ENCODE measurements at regions of chr5 and their contacts with region 1.

Region 1: GRCh38 chr5:127030259-127031146 is at the start of gene MARCHF3:
- DNase-seq: peak; percentile 96
- H3K4me3 Mint-ChIP-seq: peak within 1 kb of the TSS; percentile 89
- H3K27ac Mint-ChIP-seq: peak within 1 kb of the TSS; percentile 69
- H3K4me1 Mint-ChIP-seq: peaks cover 30% of the 10 kb centered on the region
- H3K27me3 Mint-ChIP-seq: peaks cover 32% of the 10 kb centered on the region
- total RNA-seq, gene MARCHF3: 5.2 and 5.9 TPM in 2 replicates

Region 2: GRCh38 chr5:126676195-126676624 is 354.3 kb before region 1 on chr5:
- intact Hi-C with region 1: loop called (anchors 2 kb)
- DNase-seq: peak; percentile 52
- H3K4me3 Mint-ChIP-seq: no peak overlapping the region
- H3K27ac Mint-ChIP-seq: peak overlapping the region; percentile 8
- H3K4me1 Mint-ChIP-seq: peaks cover 6% of the 10 kb centered on the region
- H3K27me3 Mint-ChIP-seq: peaks cover 3% of the 10 kb centered on the region

Region 3: DNA sequence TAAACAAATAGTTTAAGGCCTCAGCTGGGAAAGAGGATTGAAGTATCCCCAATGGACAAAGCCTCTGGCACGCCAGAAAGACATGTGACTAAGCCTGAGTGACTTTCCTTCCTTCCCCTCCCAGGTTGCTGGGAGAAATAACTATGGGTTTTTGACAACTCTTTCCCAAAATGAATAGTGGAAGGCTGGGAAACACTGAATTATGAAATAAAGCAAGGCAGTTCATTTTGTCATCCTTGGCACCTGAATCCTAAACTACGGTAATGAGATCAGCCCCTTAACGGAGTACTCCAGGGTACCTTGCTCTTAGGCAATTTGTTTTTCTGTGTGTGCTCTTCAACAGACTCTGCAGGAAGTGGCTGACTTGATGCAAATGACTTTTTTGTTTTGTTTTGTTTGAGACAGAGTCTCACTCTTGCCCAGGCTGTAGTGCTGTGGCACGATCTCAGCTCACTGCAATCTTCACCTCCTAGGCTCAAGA is 178.4 kb before region 1 on chr5:
- intact Hi-C with region 1: loop called (anchors 2 kb)
- DNase-seq: peak; percentile 28
- H3K4me3 Mint-ChIP-seq: peak overlapping the region; percentile 80
- H3K27ac Mint-ChIP-seq: peak overlapping the region; percentile 87
- H3K4me1 Mint-ChIP-seq: peaks cover 43% of the 10 kb centered on the region
- H3K27me3 Mint-ChIP-seq: no peaks in the 10 kb centered on the region

Region 4: GRCh38 chr5:127072861-127073846 is 42.7 kb after region 1 on chr5 and contains the start of gene C5orf63:
- intact Hi-C with region 1: loop called (anchors 1 kb)
- DNase-seq: peak; percentile 66
- H3K4me3 Mint-ChIP-seq: peak within 1 kb of the TSS; percentile 92
- H3K27ac Mint-ChIP-seq: peak within 1 kb of the TSS; percentile 88
- H3K4me1 Mint-ChIP-seq: peaks cover 22% of the 10 kb centered on the region
- H3K27me3 Mint-ChIP-seq: no peaks in the 10 kb centered on the region
- total RNA-seq, gene C5orf63: 4.0 and 7.0 TPM in 2 replicates

Region 5: DNA sequence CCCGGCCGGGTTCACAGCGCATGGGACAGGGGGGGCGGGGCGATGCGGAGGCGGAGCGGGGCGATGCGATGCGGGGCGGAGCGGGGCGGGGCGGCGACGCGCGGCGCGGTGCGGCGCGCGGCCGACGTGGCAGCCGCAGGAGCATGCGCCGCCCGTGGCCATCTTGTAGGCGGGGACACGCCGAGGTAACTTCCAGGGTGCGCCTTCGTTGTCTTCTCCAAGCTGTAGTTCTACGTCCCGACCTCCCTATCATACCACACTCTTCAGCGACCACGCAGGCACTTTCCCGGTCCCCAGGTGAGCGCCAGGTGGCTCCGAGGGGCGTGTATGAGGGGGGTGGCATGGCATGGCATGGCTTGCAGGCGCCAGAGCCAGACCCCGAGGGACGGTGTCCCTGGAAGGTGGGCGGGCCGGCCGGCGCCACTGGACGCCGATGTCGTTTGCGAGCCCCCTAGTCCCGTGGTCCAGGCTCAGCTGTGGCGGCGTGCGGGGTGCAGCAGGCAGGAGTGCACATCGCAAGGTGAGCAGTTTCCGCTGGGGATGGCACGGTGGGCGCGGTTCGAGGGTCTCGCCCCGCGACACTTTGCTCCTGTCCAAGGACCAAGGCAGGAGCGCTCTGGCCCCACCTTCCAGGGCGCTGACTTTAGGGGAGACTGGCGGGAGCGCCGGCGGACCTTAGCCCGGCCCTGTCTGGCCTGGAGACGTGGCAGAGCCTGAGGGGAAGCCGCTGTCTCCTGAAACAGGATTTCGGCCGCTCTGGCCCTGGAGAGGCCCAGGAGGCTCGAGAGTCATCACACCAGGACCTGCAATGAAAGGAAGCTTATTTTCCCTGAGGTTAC is 487.2 kb after region 1 on chr5 and contains the start of gene PRRC1:
- intact Hi-C with region 1: loop called (anchors 1 kb)
- DNase-seq: peak; percentile 73
- H3K4me3 Mint-ChIP-seq: peak within 1 kb of the TSS; percentile 84
- H3K27ac Mint-ChIP-seq: peak within 1 kb of the TSS; percentile 59
- H3K4me1 Mint-ChIP-seq: peaks cover 26% of the 10 kb centered on the region
- H3K27me3 Mint-ChIP-seq: peaks cover 7% of the 10 kb centered on the region
- total RNA-seq, gene PRRC1: 52.9 and 59.7 TPM in 2 replicates